ENCODE measurements at regions of chr15 and their contacts with region 1.

Region 1: GRCh38 chr15:74906446-74907162 is at the start of gene FAM219B:
- DNase-seq: peak; percentile 30 to 84 (median 71)
- ATAC-seq: peak; percentile 79
- H3K4me3 ChIP-seq: peak within 1 kb of the TSS; percentile 85 to 89
- H3K4me3 Mint-ChIP-seq: peak within 1 kb of the TSS; percentile 94
- H3K27ac ChIP-seq: peak within 1 kb of the TSS; percentile 78 to 82
- H3K27ac Mint-ChIP-seq: peak within 1 kb of the TSS; percentile 95
- H3K4me1 ChIP-seq: peaks cover 28% of the 10 kb centered on the region
- H3K4me1 Mint-ChIP-seq: peaks cover 41% of the 10 kb centered on the region
- H3K27me3 ChIP-seq: no peaks in the 10 kb centered on the region
- H3K27me3 Mint-ChIP-seq: no peaks in the 10 kb centered on the region
- CTCF ChIP-seq: no peak
- total RNA-seq, gene FAM219B: 18.6 to 22.1 TPM

Region 2: DNA sequence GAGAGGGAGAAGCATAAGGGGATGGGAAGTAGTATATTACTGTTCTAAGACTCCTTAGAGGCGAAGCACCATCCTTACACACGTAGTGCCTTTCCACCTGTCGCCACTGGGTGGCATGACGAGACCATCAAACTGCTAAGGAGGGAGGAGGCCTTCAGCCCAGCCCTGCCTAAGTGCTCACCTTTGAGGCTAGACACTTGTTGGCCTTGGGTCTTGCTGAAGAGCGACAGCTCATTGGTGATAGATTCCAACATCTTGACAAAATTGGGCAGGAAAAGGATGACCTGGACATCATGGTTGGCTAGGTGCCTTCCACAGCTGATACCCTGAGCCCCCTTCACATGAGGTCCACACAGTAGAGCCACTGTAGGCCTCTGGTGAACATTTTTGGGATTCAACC is 271.4 kb before region 1 on chr15:
- CTCF ChIA-PET with region 1: interaction called, 17 read pairs
- POLR2A ChIA-PET with region 1: no interaction called
- intact Hi-C with region 1: loop called (anchors 1 to 2 kb)
- DNase-seq: peak; percentile 53 to 84 (median 73)
- ATAC-seq: peak; percentile 95
- H3K4me3 ChIP-seq: no peak overlapping the region
- H3K4me3 Mint-ChIP-seq: no peak overlapping the region
- H3K27ac ChIP-seq: peak overlapping the region in 1 of 2 experiments; percentile 36
- H3K27ac Mint-ChIP-seq: no peak overlapping the region
- H3K4me1 ChIP-seq: peaks cover 6% of the 10 kb centered on the region
- H3K4me1 Mint-ChIP-seq: peaks cover 5% of the 10 kb centered on the region
- H3K27me3 ChIP-seq: no peaks in the 10 kb centered on the region
- H3K27me3 Mint-ChIP-seq: no peaks in the 10 kb centered on the region
- CTCF ChIP-seq: peak; percentile 82

Region 3: GRCh38 chr15:74709011-74709410 is 197.6 kb before region 1 on chr15:
- CTCF ChIA-PET with region 1: no interaction called
- POLR2A ChIA-PET with region 1: no interaction called
- intact Hi-C with region 1: no loop called
- DNase-seq: no peak
- ATAC-seq: no peak
- H3K4me3 ChIP-seq: no peak overlapping the region
- H3K4me3 Mint-ChIP-seq: no peak overlapping the region
- H3K27ac ChIP-seq: no peak overlapping the region
- H3K27ac Mint-ChIP-seq: no peak overlapping the region
- H3K4me1 ChIP-seq: no peaks in the 10 kb centered on the region
- H3K4me1 Mint-ChIP-seq: peaks cover 5% of the 10 kb centered on the region
- H3K27me3 ChIP-seq: peaks cover 0 to 5% of the 10 kb centered on the region in 2 experiments
- H3K27me3 Mint-ChIP-seq: peaks cover 15% of the 10 kb centered on the region
- CTCF ChIP-seq: no peak

Region 4: DNA sequence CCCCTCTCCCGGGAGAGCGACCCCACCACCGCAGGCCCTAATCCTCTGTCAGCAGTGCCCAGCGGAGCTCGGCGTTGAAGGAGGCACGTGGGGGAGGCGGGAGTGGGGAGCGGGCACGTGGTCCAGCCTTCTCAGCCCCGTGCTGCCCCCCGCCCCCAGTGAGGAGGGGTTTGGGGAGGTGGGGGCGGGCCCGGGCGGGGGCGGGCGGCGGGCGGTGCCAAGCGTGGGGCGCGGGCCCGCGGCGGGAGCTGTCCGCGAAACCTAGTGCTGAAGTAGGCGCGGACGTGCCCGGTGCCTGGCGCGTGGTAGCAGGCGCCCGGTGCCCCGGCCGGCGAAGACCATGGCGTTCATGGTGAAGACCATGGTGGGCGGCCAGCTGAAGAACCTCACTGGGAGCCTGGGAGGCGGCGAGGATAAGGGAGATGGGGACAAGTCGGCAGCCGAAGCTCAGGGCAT is 80.2 kb before region 1 on chr15 and contains the start of gene CPLX3:
- CTCF ChIA-PET with region 1: interaction called, 12 read pairs
- POLR2A ChIA-PET with region 1: no interaction called
- intact Hi-C with region 1: no loop called
- DNase-seq: peak in 6 of 9 experiments; percentile 25 to 64 (median 52)
- ATAC-seq: peak; percentile 86
- H3K4me3 ChIP-seq: no peak within 1 kb of the TSS
- H3K4me3 Mint-ChIP-seq: no peak within 1 kb of the TSS
- H3K27ac ChIP-seq: no peak within 1 kb of the TSS
- H3K27ac Mint-ChIP-seq: no peak within 1 kb of the TSS
- H3K4me1 ChIP-seq: no peaks in the 10 kb centered on the region
- H3K4me1 Mint-ChIP-seq: peaks cover 6% of the 10 kb centered on the region
- H3K27me3 ChIP-seq: peaks cover 2 to 19% of the 10 kb centered on the region in 2 experiments
- H3K27me3 Mint-ChIP-seq: peaks cover 32% of the 10 kb centered on the region
- CTCF ChIP-seq: no peak
- total RNA-seq, gene CPLX3: 0.19 to 0.36 TPM

Region 5: GRCh38 chr15:74857082-74857655 is 49.4 kb before region 1 on chr15:
- CTCF ChIA-PET with region 1: interaction called, 16 read pairs
- POLR2A ChIA-PET with region 1: interaction called, 5 read pairs
- intact Hi-C with region 1: loop called in 1 of 2 experiments (anchors 5 kb)
- DNase-seq: no peak
- ATAC-seq: peak; percentile 40
- H3K4me3 ChIP-seq: no peak overlapping the region
- H3K4me3 Mint-ChIP-seq: no peak overlapping the region
- H3K27ac ChIP-seq: peak overlapping the region; percentile 9 to 31
- H3K27ac Mint-ChIP-seq: peak overlapping the region; percentile 72
- H3K4me1 ChIP-seq: peaks cover 35% of the 10 kb centered on the region
- H3K4me1 Mint-ChIP-seq: peaks cover 40% of the 10 kb centered on the region
- H3K27me3 ChIP-seq: no peaks in the 10 kb centered on the region
- H3K27me3 Mint-ChIP-seq: no peaks in the 10 kb centered on the region
- CTCF ChIP-seq: no peak

Region 6: GRCh38 chr15:74878273-74878672 is 28.3 kb before region 1 on chr15:
- CTCF ChIA-PET with region 1: interaction called, 23 read pairs
- POLR2A ChIA-PET with region 1: interaction called, 3 read pairs
- intact Hi-C with region 1: loop called (anchors 5 kb)
- DNase-seq: no peak
- ATAC-seq: no peak
- H3K4me3 ChIP-seq: no peak overlapping the region
- H3K4me3 Mint-ChIP-seq: no peak overlapping the region
- H3K27ac ChIP-seq: no peak overlapping the region
- H3K27ac Mint-ChIP-seq: no peak overlapping the region
- H3K4me1 ChIP-seq: peaks cover 3% of the 10 kb centered on the region
- H3K4me1 Mint-ChIP-seq: peaks cover 7% of the 10 kb centered on the region
- H3K27me3 ChIP-seq: no peaks in the 10 kb centered on the region
- H3K27me3 Mint-ChIP-seq: no peaks in the 10 kb centered on the region
- CTCF ChIP-seq: no peak

Region 7: GRCh38 chr15:74920456-74920855 is 13.9 kb after region 1 on chr15:
- CTCF ChIA-PET with region 1: interaction called, 15 read pairs
- POLR2A ChIA-PET with region 1: no interaction called
- intact Hi-C with region 1: no loop called
- DNase-seq: no peak
- ATAC-seq: no peak
- H3K4me3 ChIP-seq: no peak overlapping the region
- H3K4me3 Mint-ChIP-seq: no peak overlapping the region
- H3K27ac ChIP-seq: no peak overlapping the region
- H3K27ac Mint-ChIP-seq: no peak overlapping the region
- H3K4me1 ChIP-seq: no peaks in the 10 kb centered on the region
- H3K4me1 Mint-ChIP-seq: no peaks in the 10 kb centered on the region
- H3K27me3 ChIP-seq: no peaks in the 10 kb centered on the region
- H3K27me3 Mint-ChIP-seq: no peaks in the 10 kb centered on the region
- CTCF ChIP-seq: no peak

Region 8: DNA sequence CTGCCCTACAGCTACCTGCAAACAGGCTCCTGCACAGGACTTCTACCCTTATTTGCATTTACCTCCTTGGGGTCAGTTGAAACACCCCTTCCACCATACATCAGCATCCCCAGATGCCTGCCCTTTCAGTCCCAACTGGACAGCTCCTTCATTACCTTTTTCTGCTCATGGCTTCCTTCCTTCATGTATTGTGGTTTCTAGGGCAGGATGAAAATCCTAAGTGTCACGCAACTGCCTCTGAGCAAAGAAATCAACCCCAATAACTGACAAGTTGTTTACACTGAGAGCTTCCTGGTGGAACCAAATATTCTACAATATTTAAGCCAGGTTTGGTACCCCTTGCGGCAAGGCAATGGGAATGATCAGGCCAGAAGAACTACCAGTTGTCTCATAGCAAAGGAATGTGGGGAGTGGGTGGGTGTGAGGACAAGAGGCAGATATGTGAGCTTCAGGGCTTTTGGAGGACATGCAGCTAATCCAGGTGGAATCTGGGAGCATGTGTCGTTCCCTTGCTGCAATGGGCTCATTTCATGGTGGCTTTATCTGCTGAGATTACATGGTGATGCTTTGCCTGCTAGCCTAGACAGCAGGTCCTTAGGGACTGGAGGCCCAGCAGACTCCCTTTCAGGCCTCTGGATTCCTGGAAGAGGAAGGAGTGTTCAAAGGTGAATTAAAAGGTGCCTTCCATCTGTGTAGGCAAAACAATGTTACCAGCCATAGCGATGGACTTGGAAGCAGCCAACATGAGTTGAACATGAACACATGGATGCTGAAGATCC is 151.7 kb after region 1 on chr15:
- CTCF ChIA-PET with region 1: no interaction called
- POLR2A ChIA-PET with region 1: no interaction called
- intact Hi-C with region 1: no loop called
- DNase-seq: no peak
- ATAC-seq: no peak
- H3K4me3 ChIP-seq: no peak overlapping the region
- H3K4me3 Mint-ChIP-seq: no peak overlapping the region
- H3K27ac ChIP-seq: no peak overlapping the region
- H3K27ac Mint-ChIP-seq: no peak overlapping the region
- H3K4me1 ChIP-seq: no peaks in the 10 kb centered on the region
- H3K4me1 Mint-ChIP-seq: no peaks in the 10 kb centered on the region
- H3K27me3 ChIP-seq: no peaks in the 10 kb centered on the region
- H3K27me3 Mint-ChIP-seq: no peaks in the 10 kb centered on the region
- CTCF ChIP-seq: no peak